ENCODE measurements at regions of chr4 and their contacts with region 1.

Region 1: DNA sequence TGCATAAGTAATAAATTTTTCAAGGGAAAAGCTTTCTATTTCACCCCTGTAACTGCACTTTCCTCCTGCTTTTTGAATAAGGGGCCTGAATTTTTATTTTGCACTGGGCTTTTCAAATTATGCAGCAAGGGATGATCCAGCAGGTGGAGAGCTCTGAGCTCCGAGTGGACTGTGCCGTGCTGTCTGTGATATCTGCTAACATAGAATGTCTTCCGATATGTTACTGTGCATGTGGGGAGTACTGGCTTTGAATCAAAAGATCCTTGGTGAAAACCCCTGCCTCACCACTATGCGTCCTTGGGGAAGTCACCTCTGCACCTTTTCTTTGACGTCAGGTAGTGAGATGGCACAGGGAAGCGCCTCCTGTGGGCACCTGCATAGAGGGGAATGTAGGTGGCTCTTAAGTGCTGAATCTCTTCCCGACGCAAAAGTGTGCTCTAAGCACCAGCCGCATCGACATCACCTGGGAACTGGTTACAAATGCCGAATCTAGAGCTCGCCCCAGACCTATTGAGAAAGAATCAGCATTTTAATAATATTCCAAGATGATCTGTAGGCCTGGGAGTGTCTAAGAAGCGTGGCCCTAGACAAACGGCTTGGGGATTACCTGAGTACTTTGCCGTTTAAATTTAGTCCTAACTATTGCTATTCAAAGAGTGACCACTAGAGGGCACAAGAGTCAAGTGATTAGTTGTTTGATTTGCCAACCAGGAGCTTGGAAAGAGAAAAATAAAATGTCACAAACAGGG is 19.2 kb upstream of the WFS1 start:
- DNase-seq: peak; percentile 66 to 85 (median 72)
- H3K4me3 ChIP-seq: no peak overlapping the region
- H3K27ac ChIP-seq: no peak overlapping the region
- H3K4me1 ChIP-seq: no peaks in the 10 kb centered on the region
- H3K27me3 ChIP-seq: peaks cover 0 to 66% (median 16%) of the 10 kb centered on the region in 5 experiments

Region 2: DNA sequence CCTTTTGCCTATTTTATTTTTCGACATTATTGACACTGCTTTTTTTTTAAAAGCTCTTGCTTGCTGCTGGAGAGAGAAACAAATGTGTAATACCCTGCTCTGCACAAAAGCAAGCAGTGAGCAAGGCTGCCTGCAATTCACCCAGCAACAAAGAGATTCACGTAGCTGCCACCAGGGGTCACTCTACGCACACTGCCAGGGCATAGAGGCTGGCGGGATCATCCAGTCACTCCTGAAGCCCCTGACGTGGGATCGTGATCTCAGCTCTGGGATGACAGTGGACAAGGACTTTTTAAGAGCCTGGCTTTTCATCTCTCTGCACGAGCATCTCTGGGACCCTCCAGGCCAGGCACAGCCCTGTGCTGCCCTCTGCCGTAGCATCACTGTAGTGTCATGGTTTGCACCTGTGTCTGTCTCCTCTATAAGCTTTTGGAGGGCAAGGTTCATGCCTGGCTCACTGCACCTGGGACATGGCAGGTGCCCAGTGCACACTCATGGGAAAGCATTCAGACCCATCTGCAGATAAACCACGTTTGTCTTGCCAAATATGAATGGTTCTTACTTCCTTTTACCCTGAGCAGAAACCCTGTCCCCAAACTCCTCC is 252.0 kb before region 1 on chr4:
- CTCF ChIA-PET with region 1: interaction called, 10 read pairs
- POLR2A ChIA-PET with region 1: interaction called, 3 read pairs
- DNase-seq: peak; percentile 59 to 79 (median 71)
- H3K4me3 ChIP-seq: no peak overlapping the region
- H3K27ac ChIP-seq: no peak overlapping the region
- H3K4me1 ChIP-seq: peaks cover 0 to 4% (median 0%) of the 10 kb centered on the region in 4 experiments
- H3K27me3 ChIP-seq: peaks cover 0 to 32% (median 2%) of the 10 kb centered on the region in 5 experiments

Region 3: DNA sequence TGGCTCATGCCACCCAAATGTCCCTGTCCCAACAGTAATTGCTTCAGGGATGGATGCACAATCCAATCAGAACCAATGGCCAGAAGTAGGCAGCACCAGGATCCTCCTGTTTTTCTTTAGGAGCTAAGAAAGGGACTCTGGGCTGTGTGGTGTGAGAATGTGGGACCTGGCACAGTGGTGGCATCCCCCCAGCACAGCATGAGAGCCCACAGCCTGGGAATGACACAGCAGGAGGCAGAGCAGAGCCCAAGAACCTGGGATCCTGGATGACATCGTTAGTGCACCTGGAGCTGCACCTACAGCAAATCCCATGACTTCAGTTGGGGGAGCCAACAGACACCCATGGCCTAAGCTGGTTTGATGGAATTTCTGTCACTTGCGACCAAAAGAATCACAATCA is 161.5 kb before region 1 on chr4:
- CTCF ChIA-PET with region 1: no interaction called
- POLR2A ChIA-PET with region 1: no interaction called
- DNase-seq: no peak
- H3K4me3 ChIP-seq: no peak overlapping the region
- H3K27ac ChIP-seq: no peak overlapping the region
- H3K4me1 ChIP-seq: peaks cover 0 to 10% (median 2%) of the 10 kb centered on the region in 4 experiments
- H3K27me3 ChIP-seq: peaks cover 0 to 6% (median 0%) of the 10 kb centered on the region in 5 experiments

Region 4: DNA sequence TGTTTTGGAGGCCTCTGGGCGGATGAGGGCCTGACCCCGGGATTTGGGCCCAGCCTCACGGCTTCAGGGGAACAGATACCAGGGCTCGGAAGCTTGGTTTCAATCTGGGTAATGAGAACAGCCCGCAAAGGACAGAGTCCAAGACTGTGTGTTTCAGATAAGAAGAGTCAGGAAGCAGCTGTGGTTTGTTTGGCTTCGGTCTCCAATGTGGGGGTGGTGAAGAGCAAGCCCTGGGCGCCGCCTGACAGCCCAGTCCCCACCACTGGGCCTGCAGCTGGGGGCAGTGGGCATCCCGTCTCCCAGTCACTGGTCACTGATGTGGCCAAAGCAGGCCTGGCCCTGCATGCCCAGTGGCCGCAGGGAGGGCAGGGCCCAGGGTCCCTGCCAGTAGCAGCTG is 28.4 kb after region 1 on chr4:
- CTCF ChIA-PET with region 1: interaction called, 38 read pairs
- POLR2A ChIA-PET with region 1: interaction called, 3 read pairs
- DNase-seq: peak; percentile 92 to 98 (median 98)
- H3K4me3 ChIP-seq: peak overlapping the region in 2 of 7 experiments; percentile 11 to 40
- H3K27ac ChIP-seq: no peak overlapping the region
- H3K4me1 ChIP-seq: peaks cover 0 to 40% (median 23%) of the 10 kb centered on the region in 4 experiments
- H3K27me3 ChIP-seq: peaks cover 0 to 74% (median 29%) of the 10 kb centered on the region in 5 experiments

Region 5: GRCh38 chr4:6319530-6320150 is 69.2 kb after region 1 on chr4:
- CTCF ChIA-PET with region 1: interaction called, 347 read pairs
- POLR2A ChIA-PET with region 1: no interaction called
- DNase-seq: no peak
- H3K4me3 ChIP-seq: no peak overlapping the region
- H3K27ac ChIP-seq: no peak overlapping the region
- H3K4me1 ChIP-seq: peaks cover 0 to 12% (median 11%) of the 10 kb centered on the region in 4 experiments
- H3K27me3 ChIP-seq: peaks cover 0 to 65% (median 14%) of the 10 kb centered on the region in 5 experiments

Region 6: DNA sequence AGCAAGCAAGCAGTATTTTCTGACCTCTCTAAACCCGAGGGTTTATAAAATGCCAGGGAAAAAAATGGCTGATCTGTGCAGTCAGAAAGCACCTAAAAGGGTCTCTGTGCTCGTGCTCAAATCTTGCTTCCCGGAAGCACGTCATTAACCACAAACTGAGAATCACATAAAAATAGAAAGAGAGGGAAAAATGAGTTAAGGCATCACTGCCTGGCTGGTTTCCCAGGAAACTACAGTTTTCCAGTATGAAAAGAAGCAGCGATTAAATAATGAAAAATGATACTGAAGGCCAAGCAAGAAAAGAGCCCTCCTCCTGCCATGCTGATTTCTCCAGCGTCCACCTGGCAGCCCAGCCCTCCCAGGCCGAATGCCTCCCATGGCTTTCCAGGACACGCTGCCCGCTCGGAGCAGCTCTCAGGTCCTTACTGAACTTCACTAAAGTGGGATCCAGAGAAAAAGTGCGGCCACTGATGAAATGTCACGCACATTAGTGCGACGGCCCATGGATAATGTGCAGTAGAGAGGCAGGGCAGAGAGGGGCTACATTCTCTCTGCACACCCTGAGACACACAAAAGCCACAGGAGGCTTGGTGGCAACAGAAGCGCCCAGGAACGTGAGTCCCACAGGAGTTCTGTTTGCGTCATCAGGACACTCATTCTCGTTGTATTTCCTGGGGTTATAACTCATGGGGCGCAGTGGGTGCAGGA is 99.6 kb after region 1 on chr4:
- CTCF ChIA-PET with region 1: interaction called, 10 read pairs
- POLR2A ChIA-PET with region 1: no interaction called
- DNase-seq: no peak
- H3K4me3 ChIP-seq: peak overlapping the region in 1 of 7 experiments; percentile 7
- H3K27ac ChIP-seq: no peak overlapping the region
- H3K4me1 ChIP-seq: no peaks in the 10 kb centered on the region
- H3K27me3 ChIP-seq: peaks cover 0 to 36% (median 0%) of the 10 kb centered on the region in 5 experiments

Measured in common myeloid progenitor, CD34-positive (primary cell).